ENCODE measurements at regions of chrX and their contacts with region 1.

Region 1: GRCh38 chrX:63513825-63514568 is 162.9 kb upstream of the SPIN4 start:
- DNase-seq: no peak

Region 2: GRCh38 chrX:63585936-63586335 is 71.9 kb after region 1 on chrX:
- intact Hi-C with region 1: loop called in 1 of 2 experiments (anchors 2 kb)
- DNase-seq: peak; percentile 52